Calu3 (cell line): ENCODE measurements at regions of chr16 and their contacts with region 1.

Region 1: GRCh38 chr16:90019543-90020259 is 445 bp upstream of the DBNDD1 start:
- DNase-seq: peak; percentile 85
- H3K4me3 Mint-ChIP-seq: peak overlapping the region; percentile 87
- H3K27ac Mint-ChIP-seq: peak overlapping the region; percentile 89
- H3K4me1 Mint-ChIP-seq: peaks cover 27% of the 10 kb centered on the region
- H3K27me3 Mint-ChIP-seq: no peaks in the 10 kb centered on the region
- CTCF ChIP-seq: peak; percentile 53

Region 2: DNA sequence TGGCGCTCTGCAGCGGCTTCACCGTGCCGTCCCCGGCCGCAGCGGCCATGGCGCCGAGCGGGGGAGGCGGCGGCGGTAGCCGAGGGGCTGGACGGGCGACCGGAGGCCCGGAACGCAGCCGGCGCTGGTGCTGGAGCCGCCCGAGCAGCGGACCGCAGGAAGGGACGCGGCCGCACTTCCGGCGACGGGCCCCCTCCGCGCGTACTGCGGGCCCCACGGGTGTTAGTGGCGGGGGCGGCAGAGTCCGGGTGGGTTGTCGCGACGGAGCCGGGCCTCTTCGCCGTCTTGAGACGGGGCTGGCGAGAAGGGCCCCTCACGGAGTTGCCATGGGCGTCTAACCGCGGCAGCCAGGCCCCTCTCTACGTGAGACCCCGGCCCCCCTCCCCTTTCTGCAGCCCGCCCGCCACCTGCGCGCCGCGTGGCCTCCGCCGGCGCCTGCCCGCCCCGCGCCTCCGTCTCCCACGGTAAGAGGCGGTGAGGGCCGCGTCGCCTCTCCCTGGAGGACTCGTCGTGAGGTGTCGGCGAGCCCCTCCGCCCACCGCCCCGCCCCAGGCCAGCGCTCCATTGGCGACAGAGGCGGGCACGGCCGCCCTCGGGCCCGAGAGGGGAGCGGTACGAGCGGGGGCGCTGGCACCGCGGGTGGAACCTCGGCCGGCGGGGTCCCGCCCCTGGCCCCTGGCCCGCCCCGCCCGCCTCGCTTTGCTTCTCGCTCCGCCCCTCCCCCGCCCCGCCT is 298.7 kb before region 1 on chr16 and contains the starts of genes VPS9D1 and ZNF276:
- CTCF ChIA-PET with region 1: no interaction called
- intact Hi-C with region 1: no loop called
- DNase-seq: peak; percentile 92
- H3K4me3 Mint-ChIP-seq: peak within 1 kb of the TSS; percentile 81
- H3K27ac Mint-ChIP-seq: peak within 1 kb of the TSS; percentile 81
- H3K4me1 Mint-ChIP-seq: peaks cover 47% of the 10 kb centered on the region
- H3K27me3 Mint-ChIP-seq: no peaks in the 10 kb centered on the region
- CTCF ChIP-seq: no peak
- total RNA-seq, gene VPS9D1: 26.7 and 28.2 TPM in 2 replicates
- total RNA-seq, gene ZNF276: 30.6 and 37.2 TPM in 2 replicates

Region 3: DNA sequence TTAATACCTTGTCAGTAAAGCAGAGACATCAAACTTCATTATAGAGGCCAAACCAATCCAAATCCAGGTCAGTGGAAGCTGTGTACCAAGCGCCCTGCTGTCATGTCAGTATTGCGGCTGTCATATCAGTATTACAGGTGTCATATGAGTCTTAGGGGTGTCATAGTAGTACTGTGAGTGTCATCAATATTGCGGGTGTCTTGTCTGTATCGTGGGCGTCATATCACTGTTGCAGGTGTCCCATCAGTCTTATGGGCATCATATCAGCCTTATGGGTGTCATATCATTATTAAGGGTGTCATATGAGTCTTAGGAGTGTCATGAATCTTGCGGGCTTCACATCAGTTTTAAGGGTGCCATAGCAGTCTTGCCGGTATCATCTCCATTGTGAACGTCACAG is 63.4 kb after region 1 on chr16:
- CTCF ChIA-PET with region 1: interaction called, 4 read pairs
- intact Hi-C with region 1: loop called (anchors 2 kb)
- DNase-seq: no peak
- H3K4me3 Mint-ChIP-seq: no peak overlapping the region
- H3K27ac Mint-ChIP-seq: no peak overlapping the region
- H3K4me1 Mint-ChIP-seq: peaks cover 7% of the 10 kb centered on the region
- H3K27me3 Mint-ChIP-seq: no peaks in the 10 kb centered on the region
- CTCF ChIP-seq: no peak